G401 (cell line): ENCODE measurements at regions of chr22 and their contacts with region 1.

Region 1: GRCh38 chr22:46079861-46080821 is 70.2 kb upstream of the PPARA start:
- DNase-seq: peak; percentile 82

Region 2: GRCh38 chr22:46023558-46023981 is 56.6 kb before region 1 on chr22:
- in situ Hi-C with region 1: loop called (anchors 5 kb)
- DNase-seq: no peak